Endothelial cell of umbilical vein (primary cell): ENCODE measurements at regions of chr1 and their contacts with region 1.

Region 1: DNA sequence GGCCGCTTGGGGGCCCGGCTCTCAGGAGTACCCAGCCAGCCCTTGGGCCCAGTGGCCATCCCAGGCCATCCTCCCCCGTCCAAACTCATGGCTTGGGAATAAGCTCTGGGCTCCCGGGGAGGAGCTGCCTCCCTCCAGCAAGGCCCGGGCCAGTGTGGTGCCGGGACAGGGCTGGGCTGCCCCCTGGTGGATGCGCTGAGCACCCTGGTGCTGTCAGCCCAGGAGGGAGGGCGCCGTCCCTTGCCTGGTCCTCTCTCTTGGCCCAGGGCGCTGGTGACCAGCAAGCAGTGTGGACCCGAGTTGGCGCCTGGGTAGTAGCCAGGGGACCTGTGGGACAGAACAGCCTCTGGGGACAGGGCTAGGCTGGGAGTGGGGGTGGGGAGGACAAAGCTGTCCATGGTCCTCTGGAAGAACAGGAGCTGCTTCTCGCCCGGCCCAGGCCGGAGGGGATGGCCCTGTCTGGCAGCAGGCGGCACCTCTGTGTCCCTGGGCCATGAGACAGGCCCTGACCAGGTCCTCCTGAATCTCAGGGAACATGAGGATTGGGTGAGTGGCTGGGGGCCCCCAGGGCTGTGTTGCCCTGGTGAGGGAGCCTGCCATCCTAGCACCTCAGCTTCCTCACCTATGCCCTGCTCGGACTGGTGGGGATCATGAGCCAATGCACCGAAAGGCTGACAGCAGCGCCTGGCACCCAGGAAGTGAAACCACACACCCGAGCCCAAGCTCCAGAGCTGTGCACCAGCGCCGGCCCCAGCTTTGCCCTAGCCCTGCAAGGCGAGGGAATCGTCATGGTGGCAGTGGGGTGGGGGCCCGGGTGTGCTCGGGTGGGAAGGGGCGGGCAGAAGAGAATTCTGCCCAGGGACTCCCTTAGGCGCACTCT is 9.4 kb downstream of the MORN1 start:
- DNase-seq: peak; percentile 65
- H3K4me3 ChIP-seq: no peak overlapping the region
- H3K27ac ChIP-seq: no peak overlapping the region
- H3K4me1 ChIP-seq: no peaks in the 10 kb centered on the region
- H3K27me3 ChIP-seq: no peaks in the 10 kb centered on the region
- CTCF ChIP-seq: peak; percentile 95 to 97
- POLR2A ChIP-seq: no peak

Region 2: GRCh38 chr1:2174348-2175054 is 207.5 kb before region 1 on chr1:
- CTCF ChIA-PET with region 1: interaction called, 54 read pairs
- POLR2A ChIA-PET with region 1: no interaction called
- dilution Hi-C with region 1: no loop called
- intact Hi-C with region 1: no loop called
- DNase-seq: peak; percentile 54
- H3K4me3 ChIP-seq: no peak overlapping the region
- H3K27ac ChIP-seq: no peak overlapping the region
- H3K4me1 ChIP-seq: no peaks in the 10 kb centered on the region
- H3K27me3 ChIP-seq: no peaks in the 10 kb centered on the region
- CTCF ChIP-seq: peak; percentile 91 to 95
- POLR2A ChIP-seq: no peak

Region 3: GRCh38 chr1:2205191-2205952 is 176.6 kb before region 1 on chr1:
- CTCF ChIA-PET with region 1: interaction called, 631 read pairs
- POLR2A ChIA-PET with region 1: no interaction called
- dilution Hi-C with region 1: no loop called
- intact Hi-C with region 1: no loop called
- DNase-seq: peak; percentile 86
- H3K4me3 ChIP-seq: peak overlapping the region in 2 of 3 experiments; percentile 26 to 45
- H3K27ac ChIP-seq: peak overlapping the region; percentile 24
- H3K4me1 ChIP-seq: peaks cover 29% of the 10 kb centered on the region
- H3K27me3 ChIP-seq: no peaks in the 10 kb centered on the region
- CTCF ChIP-seq: no peak
- POLR2A ChIP-seq: no peak

Region 4: GRCh38 chr1:2227346-2228153 is 154.4 kb before region 1 on chr1:
- CTCF ChIA-PET with region 1: interaction called, 34 read pairs
- POLR2A ChIA-PET with region 1: interaction called, 6 read pairs
- dilution Hi-C with region 1: no loop called
- intact Hi-C with region 1: loop called (anchors 1 kb)
- DNase-seq: peak; percentile 92
- H3K4me3 ChIP-seq: peak overlapping the region in 2 of 3 experiments; percentile 63 to 95
- H3K27ac ChIP-seq: peak overlapping the region; percentile 98
- H3K4me1 ChIP-seq: peaks cover 20% of the 10 kb centered on the region
- H3K27me3 ChIP-seq: no peaks in the 10 kb centered on the region
- CTCF ChIP-seq: no peak
- POLR2A ChIP-seq: peak; percentile 16

Region 5: GRCh38 chr1:2300851-2301606 is 81.0 kb before region 1 on chr1:
- CTCF ChIA-PET with region 1: interaction called, 10 read pairs
- POLR2A ChIA-PET with region 1: no interaction called
- dilution Hi-C with region 1: no loop called
- intact Hi-C with region 1: no loop called
- DNase-seq: peak; percentile 62
- H3K4me3 ChIP-seq: no peak overlapping the region
- H3K27ac ChIP-seq: peak overlapping the region; percentile 83
- H3K4me1 ChIP-seq: peaks cover 27% of the 10 kb centered on the region
- H3K27me3 ChIP-seq: no peaks in the 10 kb centered on the region
- CTCF ChIP-seq: no peak
- POLR2A ChIP-seq: peak; percentile 21

Region 6: GRCh38 chr1:2322065-2322571 is 59.9 kb before region 1 on chr1:
- CTCF ChIA-PET with region 1: interaction called, 33 read pairs
- POLR2A ChIA-PET with region 1: no interaction called
- dilution Hi-C with region 1: no loop called
- intact Hi-C with region 1: no loop called
- DNase-seq: peak; percentile 88
- H3K4me3 ChIP-seq: peak overlapping the region in 1 of 3 experiments; percentile 4
- H3K27ac ChIP-seq: no peak overlapping the region
- H3K4me1 ChIP-seq: peaks cover 5% of the 10 kb centered on the region
- H3K27me3 ChIP-seq: no peaks in the 10 kb centered on the region
- CTCF ChIP-seq: peak in 1 of 2 donors; percentile 22
- POLR2A ChIP-seq: no peak